PC-9 (cell line): ENCODE measurements at regions of chr2 and their contacts with region 1.

Region 1: GRCh38 chr2:201795607-201796477 is 10.5 kb upstream of the CDK15 start:
- DNase-seq: no peak
- H3K4me3 ChIP-seq: no peak overlapping the region
- H3K27ac ChIP-seq: no peak overlapping the region
- H3K4me1 ChIP-seq: peaks cover 28% of the 10 kb centered on the region
- H3K27me3 ChIP-seq: no peaks in the 10 kb centered on the region
- CTCF ChIP-seq: peak; percentile 75

Region 2: DNA sequence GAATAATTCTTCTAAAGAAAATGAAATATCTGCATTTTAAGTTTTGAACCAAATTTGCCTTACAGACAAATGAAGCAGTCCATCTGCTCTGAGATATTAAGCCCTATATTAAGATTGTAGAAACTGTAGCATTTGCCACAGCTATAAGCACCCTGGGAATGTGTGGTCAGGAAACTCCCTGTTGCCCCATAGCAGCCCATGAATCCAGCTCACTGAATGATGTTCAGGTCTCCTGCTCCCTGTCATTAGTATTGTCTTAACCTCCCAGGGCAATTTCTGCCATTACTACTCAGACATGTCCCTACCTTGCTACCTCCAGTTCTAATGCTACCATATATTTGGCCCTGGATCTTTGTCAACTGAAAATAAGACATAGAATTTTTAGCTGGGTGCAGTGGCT is 51.6 kb after region 1 on chr2:
- CTCF ChIA-PET with region 1: no interaction called
- POLR2A ChIA-PET with region 1: interaction called, 19 read pairs
- intact Hi-C with region 1: no loop called
- DNase-seq: no peak
- H3K4me3 ChIP-seq: no peak overlapping the region
- H3K27ac ChIP-seq: no peak overlapping the region
- H3K4me1 ChIP-seq: peaks cover 15% of the 10 kb centered on the region
- H3K27me3 ChIP-seq: no peaks in the 10 kb centered on the region
- CTCF ChIP-seq: no peak

Region 3: DNA sequence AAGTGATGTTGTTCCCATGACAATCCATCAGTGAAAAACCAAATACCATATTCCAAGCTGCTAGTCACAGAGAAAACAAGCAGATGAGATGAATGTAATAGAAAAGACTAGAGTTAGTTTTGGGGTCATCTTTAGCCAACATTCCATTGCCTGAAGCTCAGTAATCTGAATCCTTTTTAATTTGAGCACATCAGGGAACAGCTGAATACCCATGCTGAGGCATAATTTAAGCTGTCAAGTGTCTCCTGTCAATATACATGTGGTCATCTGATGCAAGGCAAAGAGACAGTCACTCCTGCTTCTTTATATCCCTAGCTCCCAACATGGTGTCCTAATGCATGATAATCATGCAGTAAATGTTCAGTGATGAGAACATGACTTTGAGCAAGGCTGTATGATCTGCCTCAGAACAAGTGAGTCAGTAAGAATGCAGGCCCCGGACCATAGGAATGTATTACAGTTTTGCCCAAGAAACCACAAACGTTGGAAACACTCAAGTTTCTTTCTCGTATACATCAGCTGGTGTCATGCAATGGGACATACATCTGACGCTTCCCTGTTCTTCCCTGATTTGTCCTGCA is 58.5 kb after region 1 on chr2:
- CTCF ChIA-PET with region 1: no interaction called
- POLR2A ChIA-PET with region 1: interaction called, 3 read pairs
- intact Hi-C with region 1: loop called (anchors 1 kb)
- DNase-seq: peak; percentile 49 to 83
- H3K4me3 ChIP-seq: no peak overlapping the region
- H3K27ac ChIP-seq: peak overlapping the region; percentile 67
- H3K4me1 ChIP-seq: peaks cover 20% of the 10 kb centered on the region
- H3K27me3 ChIP-seq: no peaks in the 10 kb centered on the region
- CTCF ChIP-seq: no peak

Region 4: GRCh38 chr2:202178342-202178958 is 382.6 kb after region 1 on chr2:
- CTCF ChIA-PET with region 1: no interaction called
- POLR2A ChIA-PET with region 1: no interaction called
- intact Hi-C with region 1: loop called (anchors 1 kb)
- DNase-seq: peak in 1 of 2 experiments; percentile 29
- H3K4me3 ChIP-seq: no peak overlapping the region
- H3K27ac ChIP-seq: no peak overlapping the region
- H3K4me1 ChIP-seq: no peaks in the 10 kb centered on the region
- H3K27me3 ChIP-seq: no peaks in the 10 kb centered on the region
- CTCF ChIP-seq: peak; percentile 84

Region 5: GRCh38 chr2:202249521-202249850 is 453.6 kb after region 1 on chr2:
- CTCF ChIA-PET with region 1: interaction called, 12 read pairs
- POLR2A ChIA-PET with region 1: no interaction called
- intact Hi-C with region 1: no loop called
- DNase-seq: peak in 1 of 2 experiments; percentile 79
- H3K4me3 ChIP-seq: peak overlapping the region; percentile 40; the same call in 1 of the 2 replicates
- H3K27ac ChIP-seq: peak overlapping the region; percentile 85
- H3K4me1 ChIP-seq: 0 out of 2 replicates have a peak, but pooled peaks cover 19% of the 10 kb centered on the region
- H3K27me3 ChIP-seq: no peaks in the 10 kb centered on the region
- CTCF ChIP-seq: no peak